ENCODE measurements at regions of chr4 and their contacts with region 1.

Region 1: DNA sequence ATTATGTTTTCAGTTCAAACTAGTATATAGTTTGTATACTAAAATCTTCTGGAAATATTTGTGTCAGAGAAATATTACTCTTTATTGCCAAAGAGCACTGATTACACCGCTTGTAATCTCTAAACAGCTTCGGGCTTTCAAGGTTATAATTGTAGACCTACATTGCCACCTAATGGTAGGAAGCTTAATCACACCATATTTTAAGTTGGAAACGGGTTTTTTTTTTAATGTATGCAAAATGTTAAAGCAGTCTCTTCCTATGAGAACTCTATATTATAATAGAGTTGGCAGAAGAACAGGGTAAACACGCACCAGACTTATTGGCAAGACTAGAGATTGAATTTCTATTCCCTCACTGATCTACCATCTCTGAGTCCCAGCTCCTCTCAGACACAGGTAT is 19.5 kb upstream of the NFXL1 start:
- DNase-seq: no peak
- H3K4me3 ChIP-seq: no peak overlapping the region
- H3K27ac ChIP-seq: no peak overlapping the region
- H3K4me1 ChIP-seq: no peaks in the 10 kb centered on the region
- H3K27me3 ChIP-seq: no peaks in the 10 kb centered on the region
- CTCF ChIP-seq: peak in 2 of 3 experiments; percentile 51 to 59
- POLR2A ChIP-seq: no peak

Region 2: GRCh38 chr4:47668810-47669408 is 264.9 kb before region 1 on chr4:
- intact Hi-C with region 1: loop called (anchors 5 kb)
- DNase-seq: no peak
- H3K4me3 ChIP-seq: no peak overlapping the region
- H3K27ac ChIP-seq: no peak overlapping the region
- H3K4me1 ChIP-seq: no peaks in the 10 kb centered on the region
- H3K27me3 ChIP-seq: no peaks in the 10 kb centered on the region
- CTCF ChIP-seq: peak in 1 of 3 experiments; percentile 56
- POLR2A ChIP-seq: no peak

Region 3: DNA sequence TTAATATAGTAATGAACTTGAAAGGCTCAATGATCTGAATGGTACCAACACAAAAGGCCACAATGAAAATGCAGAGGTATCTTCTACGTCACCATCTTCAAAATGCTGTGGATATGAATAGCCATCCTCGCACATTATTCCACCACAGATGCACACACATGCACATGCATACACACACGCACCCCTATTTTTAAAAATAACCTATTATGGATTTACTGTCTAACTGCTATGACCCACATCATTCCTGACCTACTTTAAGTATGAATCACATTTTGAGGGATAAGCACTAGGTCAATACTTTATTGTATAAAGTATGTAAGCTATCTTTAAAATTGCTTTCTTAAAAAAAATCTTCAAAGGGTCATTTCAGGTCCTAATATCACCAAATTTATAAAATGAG is 71.5 kb before region 1 on chr4:
- intact Hi-C with region 1: no loop called
- DNase-seq: no peak
- H3K4me3 ChIP-seq: no peak overlapping the region
- H3K27ac ChIP-seq: no peak overlapping the region
- H3K4me1 ChIP-seq: no peaks in the 10 kb centered on the region
- H3K27me3 ChIP-seq: no peaks in the 10 kb centered on the region
- CTCF ChIP-seq: no peak
- POLR2A ChIP-seq: no peak